ENCODE measurements at regions of chr2 and their contacts with region 1.

Region 1: DNA sequence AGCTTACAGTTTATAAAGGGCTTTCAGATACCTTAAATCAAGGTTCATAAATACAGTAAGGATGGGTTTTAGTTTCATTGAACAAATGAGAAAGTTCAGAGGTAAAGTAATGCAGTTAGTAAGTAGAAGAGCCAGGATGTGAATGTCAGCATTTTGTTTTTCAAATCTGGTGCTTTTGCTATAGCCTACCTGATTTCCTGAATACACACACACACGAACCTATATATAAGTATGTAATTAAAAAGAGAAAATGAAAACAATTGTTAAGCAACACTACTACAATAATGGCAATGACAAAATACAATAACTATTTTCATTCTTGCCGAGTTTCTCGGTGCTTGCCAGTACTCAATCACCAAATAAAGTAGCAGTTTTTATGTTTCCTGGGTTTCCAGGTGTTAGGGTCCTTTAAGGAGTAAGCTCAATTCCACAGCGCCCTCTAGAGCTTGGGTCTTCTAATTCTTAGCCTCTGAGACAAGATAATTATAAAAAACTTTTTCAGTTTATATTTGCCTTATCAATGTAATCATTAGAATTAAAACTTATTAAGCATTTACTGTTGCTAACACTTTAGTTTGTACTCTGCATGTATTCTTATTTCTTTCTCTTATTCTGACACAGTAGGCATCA is 512.9 kb upstream of the ACVR2A start:
- DNase-seq: peak; percentile 11
- H3K4me3 Mint-ChIP-seq: no peak overlapping the region
- H3K27ac Mint-ChIP-seq: no peak overlapping the region
- H3K4me1 Mint-ChIP-seq: peaks cover 33% of the 10 kb centered on the region
- H3K27me3 Mint-ChIP-seq: peaks cover 6% of the 10 kb centered on the region

Region 2: DNA sequence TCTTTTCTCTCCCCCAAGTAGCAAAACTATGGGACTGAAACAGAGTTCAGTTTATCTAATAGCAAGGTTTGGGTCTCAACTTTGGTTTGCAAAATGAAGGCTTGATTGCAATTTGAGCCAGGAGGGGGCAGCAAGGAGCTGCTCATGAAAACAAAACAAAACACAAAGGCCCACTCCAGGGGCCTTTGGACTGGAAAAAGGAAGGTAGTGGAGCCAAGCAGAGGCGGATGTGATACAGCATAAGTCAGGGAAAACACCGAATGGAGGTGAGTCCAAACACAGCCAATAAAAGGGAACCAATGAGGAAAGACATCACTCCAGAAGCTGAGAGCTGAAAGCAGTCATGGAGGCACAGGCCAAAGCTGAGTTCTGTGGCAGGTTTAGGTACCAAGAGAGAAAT is 286.8 kb before region 1 on chr2:
- intact Hi-C with region 1: loop called (anchors 1 kb)
- DNase-seq: peak; percentile 5
- H3K4me3 Mint-ChIP-seq: no peak overlapping the region
- H3K27ac Mint-ChIP-seq: peak overlapping the region; percentile 7
- H3K4me1 Mint-ChIP-seq: no peaks in the 10 kb centered on the region
- H3K27me3 Mint-ChIP-seq: peaks cover 9% of the 10 kb centered on the region

Region 3: DNA sequence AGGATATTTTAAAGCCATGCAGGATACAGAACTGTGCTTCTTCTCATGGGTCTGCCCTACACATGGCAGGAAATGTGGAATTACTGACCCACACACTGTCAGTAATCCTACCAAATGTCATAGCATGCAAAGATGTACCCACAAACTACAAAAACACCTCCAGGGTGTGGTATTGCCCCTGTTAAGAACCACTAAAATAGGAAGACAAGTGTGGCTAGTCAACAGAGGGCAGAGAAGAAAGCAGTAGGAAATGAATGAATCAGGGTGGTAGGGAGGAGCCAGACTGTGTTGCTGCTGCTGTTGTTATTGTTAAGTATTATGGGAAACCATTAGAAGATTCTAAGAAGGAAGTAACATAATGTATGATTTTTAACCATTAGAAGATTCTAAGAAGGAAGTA is 43.8 kb before region 1 on chr2:
- intact Hi-C with region 1: loop called (anchors 5 kb)
- DNase-seq: peak; percentile 37
- H3K4me3 Mint-ChIP-seq: peak overlapping the region; percentile 8
- H3K27ac Mint-ChIP-seq: peak overlapping the region; percentile 70
- H3K4me1 Mint-ChIP-seq: peaks cover 43% of the 10 kb centered on the region
- H3K27me3 Mint-ChIP-seq: no peaks in the 10 kb centered on the region

Region 4: DNA sequence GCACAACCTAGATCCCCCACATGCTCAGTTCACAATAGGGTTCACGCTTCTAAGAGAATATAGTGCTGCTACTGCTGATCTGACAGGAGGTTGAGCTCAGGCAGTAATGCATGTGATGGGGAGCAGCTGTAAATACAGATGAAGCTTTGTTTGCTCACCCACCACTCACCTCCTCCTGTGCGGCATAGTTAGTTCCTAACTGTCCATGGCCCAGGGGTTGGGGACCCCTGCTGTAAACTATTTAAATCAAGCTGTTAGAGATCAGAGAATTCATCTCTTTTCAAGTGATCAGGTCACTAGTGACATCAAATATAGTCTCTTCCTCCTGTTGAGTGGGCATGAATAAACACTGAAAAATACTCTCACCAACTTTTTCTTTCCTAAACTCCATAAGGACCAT is 424.2 kb after region 1 on chr2:
- intact Hi-C with region 1: no loop called
- DNase-seq: no peak
- H3K4me3 Mint-ChIP-seq: no peak overlapping the region
- H3K27ac Mint-ChIP-seq: no peak overlapping the region
- H3K4me1 Mint-ChIP-seq: no peaks in the 10 kb centered on the region
- H3K27me3 Mint-ChIP-seq: peaks cover 8% of the 10 kb centered on the region

Measured in activated T-helper 1 cell treated with anti-CD3 and anti-CD28 coated beads, Interleukin-12 subunit alpha, Interleukin-12 subunit beta, Interleukin-2, Interleukin-4 antibody, amounts not matched to agents 30 ng/mL and 10 ng/mL and 1 ng/mL, durations not matched to agents 14 hours and 24 hours and 36 hours (primary cell).